Activated CD8-positive, alpha-beta memory T cell treated with anti-CD3 and anti-CD28 coated beads, Interleukin-2, amount 10 ng/mL, durations not matched to agents 7 days and 5 days (primary cell): ENCODE measurements at regions of chr6 and their contacts with region 1.

Region 1: DNA sequence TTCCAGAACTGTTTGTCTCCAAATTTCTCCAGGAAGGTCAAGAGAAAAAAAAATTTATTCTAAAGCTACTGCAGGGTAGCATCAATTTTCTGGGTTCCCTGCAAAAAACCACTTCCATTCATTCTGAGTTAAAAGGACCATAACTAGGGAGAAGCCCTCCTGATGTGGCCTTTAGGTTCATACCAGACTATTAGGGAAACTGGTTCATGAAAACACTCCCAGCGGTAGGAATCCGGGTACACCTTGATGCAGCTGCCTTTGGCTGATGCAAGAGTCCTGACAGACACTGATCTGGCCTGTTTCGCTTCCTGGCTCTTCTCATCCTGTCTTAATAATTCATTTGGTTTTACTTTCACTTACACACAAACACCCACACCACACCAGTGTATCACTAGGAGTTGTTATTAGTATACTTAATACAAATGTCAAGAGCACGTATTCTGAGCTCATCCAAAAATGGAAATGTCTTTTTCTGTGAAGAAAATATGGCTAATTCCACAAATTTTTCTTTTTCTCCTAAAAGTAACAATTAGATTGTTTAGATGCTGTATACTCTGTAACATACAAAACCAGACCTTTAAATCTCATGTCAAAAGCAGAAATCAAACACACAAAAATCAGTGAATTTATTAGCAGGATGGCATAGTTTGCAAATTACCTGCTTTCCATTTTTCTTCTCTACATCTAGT is 38.4 kb upstream of the ARHGAP18 start:
- DNase-seq: peak; percentile 82
- ATAC-seq: peak; percentile 95
- H3K4me3 Mint-ChIP-seq: peak overlapping the region; percentile 72
- H3K27ac Mint-ChIP-seq: peak overlapping the region; percentile 92
- H3K4me1 Mint-ChIP-seq: peaks cover 50% of the 10 kb centered on the region
- H3K27me3 Mint-ChIP-seq: no peaks in the 10 kb centered on the region

Region 2: DNA sequence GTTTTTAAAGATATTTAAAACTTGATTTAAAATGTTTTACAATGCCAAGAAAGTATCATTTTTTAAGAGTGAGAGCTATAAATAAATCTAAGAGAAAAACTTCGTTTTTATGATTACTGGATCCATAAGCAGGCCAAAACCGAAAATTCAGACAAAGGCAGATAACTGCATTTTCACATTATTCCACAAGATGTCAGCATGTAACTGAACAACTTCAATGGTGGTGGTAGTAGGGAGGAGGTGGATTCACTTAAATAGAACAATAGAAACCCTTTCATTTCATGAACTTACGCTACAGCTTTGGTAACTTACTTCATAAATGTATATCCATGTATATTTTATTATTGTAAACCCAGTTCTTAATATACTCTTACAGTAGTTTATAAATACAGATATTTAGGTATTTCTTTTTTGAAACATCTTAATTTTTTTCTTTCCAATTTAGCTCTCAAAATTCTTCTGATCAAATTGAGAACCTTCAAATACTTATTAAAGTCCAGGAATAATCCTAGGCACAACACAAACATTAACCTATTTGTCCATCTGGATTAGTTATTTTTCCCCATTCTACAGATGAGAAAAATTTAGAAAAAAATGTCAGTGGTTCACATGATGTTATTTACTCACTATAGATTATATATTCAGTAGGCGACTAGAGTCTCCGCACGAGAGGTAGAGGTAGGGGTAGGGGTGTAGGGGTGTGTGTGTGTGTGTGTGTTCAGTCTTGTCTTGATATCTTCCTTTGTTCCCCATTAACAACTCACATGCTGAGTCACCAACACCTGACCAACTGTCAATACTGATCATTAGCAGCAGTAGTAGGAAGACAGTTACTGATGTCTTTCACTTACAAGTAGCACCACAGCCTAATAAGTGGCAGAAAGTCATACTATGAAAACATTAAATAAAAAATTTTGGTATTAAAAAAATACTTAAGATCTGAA is 149.8 kb before region 1 on chr6:
- CTCF ChIA-PET with region 1: interaction called, 19 read pairs
- DNase-seq: no peak
- ATAC-seq: peak; percentile 76
- H3K4me3 Mint-ChIP-seq: no peak overlapping the region
- H3K27ac Mint-ChIP-seq: peak overlapping the region; percentile 14
- H3K4me1 Mint-ChIP-seq: peaks cover 4% of the 10 kb centered on the region
- H3K27me3 Mint-ChIP-seq: no peaks in the 10 kb centered on the region

Region 3: GRCh38 chr6:129672881-129673643 is 75.3 kb before region 1 on chr6:
- CTCF ChIA-PET with region 1: interaction called, 17 read pairs
- DNase-seq: peak; percentile 62
- ATAC-seq: peak; percentile 69
- H3K4me3 Mint-ChIP-seq: peak overlapping the region; percentile 71
- H3K27ac Mint-ChIP-seq: peak overlapping the region; percentile 95
- H3K4me1 Mint-ChIP-seq: peaks cover 55% of the 10 kb centered on the region
- H3K27me3 Mint-ChIP-seq: no peaks in the 10 kb centered on the region

Region 4: GRCh38 chr6:129766959-129767728 is 18.8 kb after region 1 on chr6:
- CTCF ChIA-PET with region 1: interaction called, 17 read pairs
- DNase-seq: peak; percentile 84
- ATAC-seq: peak; percentile 90
- H3K4me3 Mint-ChIP-seq: peak overlapping the region; percentile 79
- H3K27ac Mint-ChIP-seq: peak overlapping the region; percentile 5
- H3K4me1 Mint-ChIP-seq: peaks cover 33% of the 10 kb centered on the region
- H3K27me3 Mint-ChIP-seq: peaks cover 63% of the 10 kb centered on the region